Body of pancreas (tissue), 4 donors: ENCODE measurements at regions of chr1 and their contacts with region 1.

Region 1: DNA sequence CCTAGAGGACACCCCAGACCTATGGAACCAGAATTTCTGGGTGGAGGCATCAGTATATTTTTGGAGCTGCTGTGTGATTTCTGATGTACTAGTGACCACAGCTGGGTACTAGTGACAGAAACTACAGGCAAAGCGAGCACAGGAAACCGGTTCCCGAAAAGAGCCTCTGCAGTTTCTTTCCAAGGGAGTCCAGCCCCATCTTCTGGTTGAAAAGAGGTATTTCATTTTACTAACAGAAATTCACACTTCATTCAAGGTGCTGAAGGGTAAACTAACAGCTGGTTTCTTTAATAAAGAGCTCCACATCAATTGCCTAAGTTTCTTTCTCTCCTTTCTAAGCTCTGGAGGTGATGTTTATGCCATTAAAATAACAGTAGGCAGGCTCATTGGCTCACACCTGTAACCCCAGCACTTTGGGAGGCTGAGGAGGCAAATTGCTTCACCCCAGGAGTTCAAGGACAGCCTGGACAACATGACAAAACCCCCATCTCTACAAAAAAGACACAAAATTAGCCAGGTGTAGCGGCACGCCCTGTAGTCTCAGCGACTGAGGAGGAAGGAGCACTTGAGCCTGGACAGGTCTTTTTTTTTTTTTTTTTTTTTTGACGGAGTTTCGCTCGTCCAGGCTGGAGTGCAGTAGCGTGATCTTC is 22.0 kb downstream of the THAP3 start:
- DNase-seq: peak; percentile 36 to 66 (median 48)
- ATAC-seq: peak; percentile 69
- H3K4me3 ChIP-seq: no peak overlapping the region
- H3K27ac ChIP-seq: no peak overlapping the region
- H3K4me1 ChIP-seq: no peaks in the 10 kb centered on the region
- H3K27me3 ChIP-seq: no peaks in the 10 kb centered on the region
- CTCF ChIP-seq: peak; percentile 27 to 77 (median 63)
- POLR2A ChIP-seq: no peak

Region 2: GRCh38 chr1:6489799-6490180 is 156.8 kb before region 1 on chr1:
- intact Hi-C with region 1: loop called (anchors 10 kb)
- DNase-seq: peak; percentile 72 to 77 (median 75)
- ATAC-seq: peak; percentile 68
- H3K4me3 ChIP-seq: peak overlapping the region; percentile 58 to 74
- H3K27ac ChIP-seq: peak overlapping the region in 3 of 4 donors; percentile 80 to 85 (median 84)
- H3K4me1 ChIP-seq: peaks cover 42% of the 10 kb centered on the region
- H3K27me3 ChIP-seq: peaks cover 0 to 13% of the 10 kb centered on the region in 2 donors
- CTCF ChIP-seq: peak; percentile 70 to 95 (median 81)
- POLR2A ChIP-seq: no peak